Activated CD4-positive, alpha-beta T cell treated with anti-CD3 and anti-CD28 coated beads for 36 hours (primary cell): ENCODE measurements at regions of chr12 and their contacts with region 1.

Region 1: DNA sequence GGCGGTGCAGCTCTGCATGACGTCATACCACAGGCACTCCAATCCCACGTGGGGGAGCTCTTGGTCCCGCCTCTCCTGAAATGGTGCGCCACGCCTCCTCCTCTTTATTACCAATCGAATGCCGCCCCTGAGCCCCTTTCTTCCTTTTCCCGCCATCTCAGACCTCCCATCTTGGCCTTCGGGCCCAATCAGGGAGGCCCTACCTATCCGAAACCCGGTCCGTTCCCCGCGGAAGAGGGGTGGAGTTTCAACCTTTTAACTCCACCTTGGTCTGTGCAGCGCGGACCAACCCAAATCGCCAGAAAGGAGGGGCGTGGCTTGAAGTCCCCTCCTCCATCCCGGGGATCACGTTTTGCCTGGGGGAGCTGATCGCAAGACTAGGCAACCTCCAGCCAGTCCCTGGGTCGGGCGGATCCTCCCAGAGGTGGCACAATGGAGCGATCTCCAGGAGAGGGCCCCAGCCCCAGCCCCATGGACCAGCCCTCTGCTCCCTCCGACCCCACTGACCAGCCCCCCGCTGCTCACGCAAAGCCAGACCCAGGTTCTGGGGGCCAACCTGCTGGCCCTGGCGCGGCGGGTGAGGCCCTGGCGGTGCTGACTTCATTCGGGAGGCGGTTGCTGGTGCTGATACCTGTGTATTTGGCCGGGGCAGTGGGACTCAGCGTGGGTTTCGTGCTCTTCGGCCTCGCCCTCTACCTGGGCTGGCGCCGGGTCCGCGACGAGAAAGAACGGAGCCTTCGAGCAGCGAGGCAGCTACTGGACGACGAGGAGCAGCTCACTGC is at the start of gene ESYT1:
- DNase-seq: peak; percentile 98
- ATAC-seq: peak; percentile 96
- H3K4me3 Mint-ChIP-seq: peak within 1 kb of the TSS; percentile 93
- H3K27ac Mint-ChIP-seq: peak within 1 kb of the TSS; percentile 95
- H3K4me1 Mint-ChIP-seq: peaks cover 55% of the 10 kb centered on the region
- H3K27me3 Mint-ChIP-seq: no peaks in the 10 kb centered on the region
- total RNA-seq, gene ESYT1: 132 to 160 TPM

Region 2: GRCh38 chr12:55188974-55189556 is 939.0 kb before region 1 on chr12:
- CTCF ChIA-PET with region 1: no interaction called
- POLR2A ChIA-PET with region 1: no interaction called
- intact Hi-C with region 1: no loop called
- DNase-seq: peak; percentile 59
- ATAC-seq: peak; percentile 81
- H3K4me3 Mint-ChIP-seq: no peak overlapping the region
- H3K27ac Mint-ChIP-seq: no peak overlapping the region
- H3K4me1 Mint-ChIP-seq: no peaks in the 10 kb centered on the region
- H3K27me3 Mint-ChIP-seq: peaks cover 32% of the 10 kb centered on the region

Region 3: DNA sequence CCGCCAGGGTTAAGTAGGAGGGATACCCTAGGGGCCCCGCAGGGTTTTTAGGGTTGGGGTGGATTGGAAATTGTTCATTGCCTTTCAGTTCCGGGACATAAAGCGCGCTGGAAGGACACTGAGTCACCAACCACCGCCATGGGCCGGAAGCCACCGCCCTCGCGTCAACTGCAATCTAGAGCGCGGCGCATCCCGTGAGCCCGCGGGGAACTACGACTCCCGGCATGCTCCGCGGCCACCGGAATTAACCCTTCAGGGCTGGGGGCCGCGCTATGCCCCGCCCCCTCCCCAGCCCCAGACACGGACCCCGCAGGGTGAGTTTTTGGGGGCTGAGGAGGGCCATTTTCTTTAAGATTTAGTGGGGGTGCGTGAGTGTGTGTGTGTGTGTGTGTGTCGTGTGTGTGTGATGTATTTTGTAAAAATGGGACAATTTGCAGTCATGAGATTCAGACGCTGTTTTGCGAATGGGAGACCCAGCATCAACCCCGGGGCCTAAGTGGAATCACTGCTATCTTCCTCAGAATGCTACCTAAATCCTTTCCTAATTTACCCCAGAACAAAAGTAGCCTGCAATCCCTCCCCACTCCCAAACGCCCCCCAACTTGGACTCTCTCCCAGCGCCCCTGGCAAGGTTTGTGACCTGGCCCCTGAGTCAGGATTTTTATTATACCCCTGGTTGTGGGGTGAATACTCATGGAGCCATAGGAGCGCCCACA is 24.4 kb after region 1 on chr12 and contains the start of gene MYL6B:
- CTCF ChIA-PET with region 1: interaction called, 18 read pairs
- POLR2A ChIA-PET with region 1: interaction called, 13 read pairs
- intact Hi-C with region 1: loop called (anchors 1 kb)
- DNase-seq: peak; percentile 98
- ATAC-seq: peak; percentile 92
- H3K4me3 Mint-ChIP-seq: peak within 1 kb of the TSS; percentile 88
- H3K27ac Mint-ChIP-seq: peak within 1 kb of the TSS; percentile 99
- H3K4me1 Mint-ChIP-seq: peaks cover 29% of the 10 kb centered on the region
- H3K27me3 Mint-ChIP-seq: no peaks in the 10 kb centered on the region
- total RNA-seq, gene MYL6B: 76.3 to 79.3 TPM

Region 4: DNA sequence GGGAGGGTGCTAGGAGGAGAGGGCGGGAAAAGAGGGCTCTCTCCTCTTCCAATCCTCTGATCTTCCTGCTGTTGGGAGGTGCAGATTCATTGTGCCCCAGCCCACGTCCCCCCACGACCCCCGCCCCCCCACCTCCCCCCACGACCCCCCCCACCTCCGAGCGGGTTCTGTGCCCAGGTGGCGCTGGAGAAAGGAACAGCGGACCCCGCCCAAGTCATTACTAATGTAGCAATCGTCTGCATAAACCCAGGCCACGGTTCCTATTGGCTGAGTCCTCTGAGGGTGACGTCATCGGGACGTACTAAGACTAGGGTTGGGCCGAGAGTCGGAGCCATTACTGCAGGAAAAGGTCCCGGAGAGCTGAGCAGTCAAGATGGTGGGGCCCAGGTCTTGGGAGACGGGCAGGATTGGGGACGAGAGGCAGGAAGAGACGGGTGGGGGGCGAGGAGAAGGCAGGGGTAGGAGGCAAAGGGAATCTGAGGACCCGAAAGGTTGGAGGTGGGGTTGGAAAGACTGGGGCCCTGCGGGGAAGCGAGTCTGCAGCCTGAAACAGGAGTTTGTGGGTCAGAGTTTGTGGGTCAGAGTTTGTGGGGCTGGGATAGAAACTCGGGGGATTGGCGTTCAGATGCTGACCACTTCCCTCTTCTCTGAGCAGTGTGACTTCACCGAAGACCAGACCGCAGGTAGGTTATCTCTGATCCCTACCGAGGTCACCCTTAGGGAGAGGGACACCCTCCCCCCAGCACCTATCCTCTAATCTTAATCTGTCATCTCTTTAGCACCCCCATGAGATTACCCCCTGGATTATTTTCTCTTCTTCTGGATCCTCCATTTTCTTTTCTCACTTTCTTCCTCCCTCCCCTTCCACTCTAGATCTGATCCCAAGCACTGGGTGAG is 30.2 kb after region 1 on chr12 and contains the start of gene MYL6:
- CTCF ChIA-PET with region 1: interaction called, 9 read pairs
- POLR2A ChIA-PET with region 1: interaction called, 19 read pairs
- intact Hi-C with region 1: loop called (anchors 1 kb)
- DNase-seq: peak; percentile 96
- ATAC-seq: peak; percentile 85
- H3K4me3 Mint-ChIP-seq: peak within 1 kb of the TSS; percentile 99
- H3K27ac Mint-ChIP-seq: peak within 1 kb of the TSS; percentile 96
- H3K4me1 Mint-ChIP-seq: peaks cover 30% of the 10 kb centered on the region
- H3K27me3 Mint-ChIP-seq: no peaks in the 10 kb centered on the region
- total RNA-seq, gene MYL6: 692 to 918 TPM

Region 5: GRCh38 chr12:56258057-56258819 is 130.2 kb after region 1 on chr12 and contains the start of gene ANKRD52:
- CTCF ChIA-PET with region 1: interaction called, 7 read pairs
- POLR2A ChIA-PET with region 1: no interaction called
- intact Hi-C with region 1: loop called in 1 of 2 experiments (anchors 2 kb)
- DNase-seq: peak; percentile 90
- ATAC-seq: peak; percentile 92
- H3K4me3 Mint-ChIP-seq: peak within 1 kb of the TSS; percentile 83
- H3K27ac Mint-ChIP-seq: peak within 1 kb of the TSS; percentile 72
- H3K4me1 Mint-ChIP-seq: peaks cover 16% of the 10 kb centered on the region
- H3K27me3 Mint-ChIP-seq: no peaks in the 10 kb centered on the region
- total RNA-seq, gene ANKRD52: 29.2 to 31.0 TPM

Region 6: DNA sequence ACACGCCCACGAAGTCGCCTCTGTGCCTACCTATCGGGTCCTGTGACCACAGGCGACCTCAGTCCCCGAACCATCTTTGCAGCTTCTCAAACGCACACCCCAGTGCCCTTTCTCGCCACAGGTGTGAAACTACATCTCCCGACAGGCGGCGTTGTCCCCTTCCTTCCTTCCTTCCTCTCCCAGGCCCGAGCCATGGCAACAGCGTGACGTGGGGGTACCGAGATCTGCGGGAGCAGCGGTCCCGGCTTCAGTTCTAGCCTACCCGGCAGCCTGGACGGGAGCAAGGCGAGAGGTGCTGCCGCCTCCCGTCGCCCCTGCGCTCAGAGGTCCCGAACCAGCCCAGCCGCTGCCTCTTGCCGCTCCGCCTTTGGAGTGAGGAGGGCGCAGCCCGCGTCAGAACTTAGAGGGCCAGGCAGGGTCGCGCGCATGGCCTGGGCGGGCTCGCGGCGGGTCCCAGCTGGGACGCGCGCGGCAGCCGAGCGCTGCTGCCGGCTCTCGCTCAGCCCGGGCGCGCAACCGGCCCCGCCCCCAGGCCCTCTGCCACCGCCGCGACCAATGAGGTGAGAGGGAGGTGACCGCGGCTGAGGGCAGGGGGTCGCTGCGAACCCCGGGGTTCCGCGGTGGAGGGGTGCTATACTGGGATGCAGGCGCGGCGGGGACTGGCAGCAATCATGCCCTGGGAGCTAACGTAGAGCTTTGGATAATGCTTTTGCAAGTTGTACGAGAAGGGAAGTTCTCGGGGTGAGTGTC is 138.8 kb after region 1 on chr12 and contains the start of gene COQ10A:
- CTCF ChIA-PET with region 1: no interaction called
- POLR2A ChIA-PET with region 1: no interaction called
- intact Hi-C with region 1: loop called (anchors 2 to 5 kb)
- DNase-seq: peak; percentile 90
- ATAC-seq: peak; percentile 90
- H3K4me3 Mint-ChIP-seq: peak within 1 kb of the TSS; percentile 89
- H3K27ac Mint-ChIP-seq: peak within 1 kb of the TSS; percentile 89
- H3K4me1 Mint-ChIP-seq: peaks cover 9% of the 10 kb centered on the region
- H3K27me3 Mint-ChIP-seq: no peaks in the 10 kb centered on the region
- total RNA-seq, gene COQ10A: 5.2 to 7.5 TPM

Region 7: DNA sequence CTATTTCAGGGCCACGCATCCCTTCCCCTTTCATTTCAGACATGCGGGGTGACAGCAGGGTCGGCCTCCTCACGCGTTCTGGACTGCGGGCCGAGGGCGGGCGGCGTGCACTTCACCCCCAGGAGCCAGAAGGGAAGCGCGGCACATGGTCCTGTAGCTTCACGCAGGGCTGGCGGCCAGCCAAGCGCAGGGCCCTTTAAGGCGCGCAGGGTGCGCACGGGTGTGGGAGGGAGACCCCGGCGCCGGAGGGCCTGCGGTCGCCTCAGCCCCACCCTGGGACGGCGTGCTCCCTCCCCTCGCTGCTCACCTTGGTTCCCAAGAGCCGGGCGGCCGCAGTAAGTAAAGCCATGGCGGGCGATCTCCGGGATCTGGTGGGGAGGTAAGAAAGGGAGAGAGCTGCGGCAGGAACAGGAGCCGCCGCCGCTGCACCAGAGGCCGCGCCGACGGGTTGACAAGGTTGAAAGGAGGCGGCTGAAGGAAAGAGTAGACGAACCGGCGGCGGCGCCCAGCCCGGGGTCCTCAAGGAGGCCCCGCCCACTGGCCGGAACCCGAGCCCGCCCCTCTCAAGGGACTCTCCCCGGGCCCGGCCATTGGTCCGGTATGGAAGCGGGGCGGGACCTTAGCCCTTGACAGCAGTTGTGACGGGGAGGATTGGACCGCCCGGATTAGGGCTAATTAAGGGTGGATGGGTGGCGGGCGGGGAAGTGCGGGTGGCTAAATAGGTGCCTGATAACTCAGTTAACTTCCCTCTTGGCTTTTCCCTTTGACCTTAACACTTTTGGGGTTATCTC is 172.0 kb after region 1 on chr12 and contains the start of gene CS:
- CTCF ChIA-PET with region 1: interaction called, 4 read pairs
- POLR2A ChIA-PET with region 1: no interaction called
- intact Hi-C with region 1: loop called in 1 of 2 experiments (anchors 1 kb)
- DNase-seq: peak; percentile 99
- ATAC-seq: peak; percentile 98
- H3K4me3 Mint-ChIP-seq: peak within 1 kb of the TSS; percentile 96
- H3K27ac Mint-ChIP-seq: peak within 1 kb of the TSS; percentile 91
- H3K4me1 Mint-ChIP-seq: peaks cover 49% of the 10 kb centered on the region
- H3K27me3 Mint-ChIP-seq: no peaks in the 10 kb centered on the region
- total RNA-seq, gene CS: 197 to 293 TPM

Region 8: GRCh38 chr12:56636675-56637540 is 508.8 kb after region 1 on chr12:
- CTCF ChIA-PET with region 1: no interaction called
- POLR2A ChIA-PET with region 1: no interaction called
- intact Hi-C with region 1: loop called in 1 of 2 experiments (anchors 2 kb)
- DNase-seq: peak; percentile 98
- ATAC-seq: peak; percentile 73
- H3K4me3 Mint-ChIP-seq: peak overlapping the region; percentile 87
- H3K27ac Mint-ChIP-seq: peak overlapping the region; percentile 92
- H3K4me1 Mint-ChIP-seq: peaks cover 60% of the 10 kb centered on the region
- H3K27me3 Mint-ChIP-seq: no peaks in the 10 kb centered on the region